ENCODE measurements at regions of chrX and their contacts with region 1.

Region 1: DNA sequence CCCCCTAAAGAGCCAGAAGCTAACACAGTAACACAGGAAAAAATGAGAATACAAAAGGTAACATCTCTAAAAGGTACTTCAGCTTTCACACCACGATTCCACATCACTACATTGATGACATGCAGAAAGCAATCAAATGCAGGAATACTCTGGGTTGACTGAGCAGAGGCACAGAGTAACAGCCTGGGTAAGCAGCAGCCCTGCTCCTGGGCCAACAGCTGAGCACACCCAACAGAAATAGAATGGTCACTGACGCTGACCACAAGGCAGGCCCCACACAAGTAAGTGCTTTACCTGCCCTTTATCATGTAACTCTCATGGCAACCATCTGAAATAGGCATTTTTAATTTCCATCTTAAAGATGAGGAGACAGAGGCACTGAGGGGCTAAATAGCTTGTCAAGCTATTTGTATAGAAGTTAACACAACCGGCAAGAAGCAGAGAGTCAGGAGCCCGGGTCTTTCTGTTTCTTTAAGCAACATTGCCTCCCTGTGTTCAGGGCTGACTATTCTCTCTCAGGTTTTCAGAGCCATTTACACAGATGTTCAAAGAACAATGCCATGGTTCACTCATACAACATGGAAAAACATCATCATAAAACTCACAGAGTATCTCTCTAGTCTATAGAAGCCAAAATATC is 168.9 kb downstream of the ZNF674 start:
- DNase-seq: peak; percentile 56
- H3K4me3 Mint-ChIP-seq: no peak overlapping the region
- H3K27ac Mint-ChIP-seq: no peak overlapping the region
- H3K4me1 Mint-ChIP-seq: peaks cover 20% of the 10 kb centered on the region
- H3K27me3 Mint-ChIP-seq: no peaks in the 10 kb centered on the region

Region 2: DNA sequence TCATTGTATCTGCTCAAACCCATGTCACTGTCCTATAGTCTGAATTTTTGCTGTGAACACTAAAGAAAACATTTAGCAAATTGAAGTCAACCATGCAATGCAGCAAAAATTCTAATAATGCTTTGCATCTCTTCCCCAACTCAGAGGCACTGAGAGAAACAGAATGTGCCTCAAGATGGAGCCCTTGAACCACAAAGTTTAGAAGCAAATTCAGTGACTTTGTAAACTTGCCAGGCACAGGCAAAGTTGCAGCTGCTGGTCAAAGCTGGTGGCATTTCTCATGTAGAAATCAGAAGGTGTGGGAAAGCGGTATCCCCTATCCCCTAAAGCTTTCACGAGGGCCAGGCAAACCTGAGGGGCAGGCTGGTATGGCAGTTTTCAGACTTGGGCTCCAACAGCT is 1054.0 kb before region 1 on chrX:
- CTCF ChIA-PET with region 1: interaction called, 3 read pairs
- intact Hi-C with region 1: loop called (anchors 5 kb)
- DNase-seq: peak; percentile 18
- H3K4me3 Mint-ChIP-seq: no peak overlapping the region
- H3K27ac Mint-ChIP-seq: no peak overlapping the region
- H3K4me1 Mint-ChIP-seq: no peaks in the 10 kb centered on the region
- H3K27me3 Mint-ChIP-seq: peaks cover 2% of the 10 kb centered on the region

Region 3: DNA sequence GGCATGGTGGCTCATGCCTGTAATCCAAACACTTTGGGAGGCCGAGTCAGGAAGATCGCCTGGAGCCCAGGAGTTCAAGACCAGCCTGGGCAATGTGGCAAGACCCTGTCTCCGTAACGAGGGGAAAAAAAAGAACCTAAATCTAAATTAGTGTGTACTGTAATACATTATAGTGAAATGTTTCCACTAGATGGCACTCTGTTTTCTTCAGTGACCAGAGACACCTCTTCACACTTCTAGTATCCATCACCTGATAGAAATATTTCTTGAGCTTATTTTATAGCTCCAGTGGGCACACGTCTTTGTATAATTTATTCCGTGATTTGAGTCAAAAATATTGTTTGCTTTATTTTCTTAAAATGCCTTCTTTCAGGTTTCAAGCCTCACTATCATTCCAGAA is 574.8 kb before region 1 on chrX:
- CTCF ChIA-PET with region 1: no interaction called
- intact Hi-C with region 1: loop called (anchors 2 kb)
- DNase-seq: no peak
- H3K4me3 Mint-ChIP-seq: no peak overlapping the region
- H3K27ac Mint-ChIP-seq: peak overlapping the region; percentile 70
- H3K4me1 Mint-ChIP-seq: peaks cover 75% of the 10 kb centered on the region
- H3K27me3 Mint-ChIP-seq: no peaks in the 10 kb centered on the region

Region 4: GRCh38 chrX:46279925-46280313 is 96.4 kb before region 1 on chrX:
- CTCF ChIA-PET with region 1: interaction called, 4 read pairs
- intact Hi-C with region 1: loop called (anchors 10 kb)
- DNase-seq: no peak
- H3K4me3 Mint-ChIP-seq: no peak overlapping the region
- H3K27ac Mint-ChIP-seq: peak overlapping the region; percentile 72
- H3K4me1 Mint-ChIP-seq: peaks cover 24% of the 10 kb centered on the region
- H3K27me3 Mint-ChIP-seq: no peaks in the 10 kb centered on the region